ENCODE measurements at regions of chr10 and their contacts with region 1.

Region 1: DNA sequence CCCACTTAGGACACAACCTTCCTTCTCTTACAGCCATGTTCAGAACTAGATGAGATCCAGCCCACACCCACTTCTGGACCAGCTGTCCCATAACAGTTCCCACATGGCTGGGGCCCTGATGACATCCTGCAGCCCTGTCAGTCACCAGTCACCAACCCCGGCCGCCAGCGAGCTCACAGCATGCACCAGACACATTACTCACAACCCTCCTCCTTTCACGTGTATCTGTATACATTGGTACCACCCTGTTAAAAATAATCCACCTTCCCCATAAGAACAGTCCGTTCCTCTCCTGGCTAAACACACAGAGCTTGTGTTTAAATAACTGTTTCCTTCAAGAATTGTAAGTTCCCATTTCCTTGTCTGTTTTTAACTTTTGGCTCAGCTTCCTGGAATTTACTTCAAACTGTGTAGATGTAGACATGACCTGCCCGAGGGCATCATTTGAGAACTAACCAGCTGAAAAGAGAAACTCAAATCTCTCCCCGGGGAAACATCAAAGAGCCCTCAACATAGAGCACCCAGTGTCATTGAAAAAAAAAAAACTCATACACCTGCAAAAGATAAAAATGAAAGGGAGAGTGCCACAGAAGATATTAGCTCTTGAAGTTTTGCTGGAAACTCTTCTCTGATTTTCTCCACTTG is 26.0 kb upstream of the PRLHR start:
- DNase-seq: no peak
- ATAC-seq: no peak
- H3K4me3 ChIP-seq: no peak overlapping the region
- H3K27ac ChIP-seq: no peak overlapping the region
- H3K4me1 ChIP-seq: no peaks in the 10 kb centered on the region
- H3K27me3 ChIP-seq: peaks cover 5% of the 10 kb centered on the region
- CTCF ChIP-seq: no peak

Region 2: DNA sequence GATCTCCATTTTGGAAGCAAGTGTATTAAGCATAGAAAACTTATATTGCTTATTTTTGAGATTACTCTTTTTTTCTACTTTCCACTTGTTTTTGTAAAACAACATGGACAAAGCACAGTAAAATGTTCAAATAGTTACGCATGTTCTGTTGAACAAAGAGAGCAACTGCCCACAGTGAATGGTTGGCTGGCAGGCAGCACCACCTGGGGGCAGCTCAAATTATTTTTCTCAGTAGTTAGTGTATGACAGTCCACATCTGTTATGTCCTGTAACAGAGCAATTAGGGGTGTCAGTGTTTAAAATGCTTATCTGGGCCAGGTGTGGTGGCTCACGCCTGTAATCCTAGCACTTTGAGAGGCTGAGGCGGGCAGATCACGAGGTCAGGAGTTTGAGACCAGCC is 179.5 kb after region 1 on chr10:
- CTCF ChIA-PET with region 1: interaction called, 10 read pairs
- POLR2A ChIA-PET with region 1: no interaction called
- in situ Hi-C with region 1: no loop called
- intact Hi-C with region 1: no loop called
- DNase-seq: no peak
- ATAC-seq: peak; percentile 79
- H3K4me3 ChIP-seq: no peak overlapping the region
- H3K27ac ChIP-seq: no peak overlapping the region
- H3K4me1 ChIP-seq: peaks cover 3% of the 10 kb centered on the region; the same call in 1 of the 2 replicates
- H3K27me3 ChIP-seq: 0 out of 2 replicates have a peak, but pooled peaks cover 2% of the 10 kb centered on the region
- CTCF ChIP-seq: peak; percentile 80